ENCODE measurements at regions of chr1 and their contacts with region 1.

Region 1: DNA sequence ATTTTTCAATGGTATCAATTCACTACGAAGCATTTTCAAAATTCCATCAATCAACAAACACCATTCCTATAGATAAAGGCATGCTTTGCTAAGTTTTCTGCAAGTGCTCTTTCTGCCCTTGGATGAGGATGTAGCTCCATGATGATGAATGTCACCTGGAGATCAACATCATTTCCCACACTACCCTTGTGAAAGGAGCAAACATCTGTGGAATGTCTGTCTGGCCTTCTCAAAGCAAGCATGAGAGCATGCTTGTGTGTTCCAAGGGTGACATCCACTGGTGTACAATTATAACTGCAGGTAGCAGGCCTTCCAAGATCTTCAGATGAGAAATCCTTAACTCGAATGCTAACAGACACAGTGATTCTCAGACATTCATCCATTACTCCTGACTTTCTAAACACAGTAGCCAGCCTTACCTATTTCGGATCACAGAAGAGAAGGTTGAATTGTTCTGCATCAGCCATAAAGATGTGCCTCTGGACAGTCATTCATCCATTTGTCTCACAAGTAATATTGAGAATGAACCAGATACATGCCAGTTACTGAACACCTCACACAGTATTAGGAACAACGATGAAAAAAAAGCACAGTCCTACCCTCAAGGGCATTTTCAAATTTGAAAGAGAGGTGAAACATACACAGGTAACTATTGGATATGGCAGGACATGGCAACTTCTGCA is 162.4 kb downstream of the TPR start:
- DNase-seq: peak; percentile 63
- H3K4me3 Mint-ChIP-seq: no peak overlapping the region
- H3K27ac Mint-ChIP-seq: no peak overlapping the region
- H3K4me1 Mint-ChIP-seq: no peaks in the 10 kb centered on the region
- H3K27me3 Mint-ChIP-seq: no peaks in the 10 kb centered on the region
- CTCF ChIP-seq: peak; percentile 78

Region 2: DNA sequence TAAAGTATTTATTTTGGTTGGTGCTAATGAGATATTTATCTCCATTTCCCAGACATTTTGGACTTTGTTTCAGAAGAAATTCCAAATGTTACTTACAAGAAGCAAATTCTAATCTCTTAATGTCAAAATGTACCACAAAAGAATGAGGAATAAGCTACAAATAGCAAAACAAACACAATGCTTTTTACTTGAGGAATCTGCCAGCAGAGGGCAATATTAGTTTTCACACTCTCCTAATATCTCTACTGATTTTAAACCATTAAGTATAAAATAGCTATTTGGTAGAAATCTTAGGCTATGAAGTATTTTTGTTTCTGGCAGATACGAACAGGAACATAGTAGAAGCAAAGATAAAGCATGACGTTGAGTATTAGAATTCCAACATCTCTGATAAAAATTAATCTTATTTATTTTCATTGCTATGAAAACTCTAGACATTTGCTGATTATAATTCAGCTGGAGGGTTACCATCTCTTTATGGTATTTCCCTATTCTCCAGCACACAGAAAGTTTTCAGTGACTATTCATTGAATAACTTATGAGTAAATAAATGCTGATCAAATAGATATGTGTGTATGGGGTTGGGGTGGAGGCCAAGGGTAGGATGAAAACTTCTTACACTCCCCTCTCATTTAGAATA is 491.9 kb before region 1 on chr1:
- CTCF ChIA-PET with region 1: interaction called, 9 read pairs
- intact Hi-C with region 1: loop called (anchors 1 kb)
- DNase-seq: peak; percentile 18
- H3K4me3 Mint-ChIP-seq: no peak overlapping the region
- H3K27ac Mint-ChIP-seq: no peak overlapping the region
- H3K4me1 Mint-ChIP-seq: peaks cover 8% of the 10 kb centered on the region
- H3K27me3 Mint-ChIP-seq: no peaks in the 10 kb centered on the region
- CTCF ChIP-seq: peak; percentile 63

Region 3: DNA sequence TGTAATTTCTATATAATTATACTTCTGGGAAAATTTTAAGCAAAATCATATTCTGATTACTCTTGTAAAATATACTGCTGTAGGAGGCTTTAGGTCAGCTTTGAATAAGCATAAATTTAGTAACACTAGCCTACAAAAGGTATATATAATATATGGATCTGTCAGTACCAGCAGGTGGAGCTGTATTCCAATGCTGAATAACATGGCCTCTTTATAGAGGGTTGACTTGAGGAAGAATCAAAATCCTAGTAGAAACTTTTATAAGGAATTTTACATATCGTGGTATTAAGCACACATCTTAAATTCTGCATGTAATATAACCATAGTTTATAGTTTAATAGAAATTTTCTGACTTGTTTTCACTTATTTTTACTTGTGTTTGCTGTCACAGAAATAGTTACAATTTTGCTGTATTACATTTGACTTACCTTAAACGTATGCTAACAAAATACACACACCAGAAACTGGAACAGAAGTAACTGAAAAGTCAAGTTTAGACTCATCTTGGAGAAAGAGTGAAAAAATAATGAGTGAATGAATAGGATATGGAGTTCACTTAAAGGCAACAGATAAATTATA is 399.2 kb before region 1 on chr1:
- CTCF ChIA-PET with region 1: interaction called, 4 read pairs
- intact Hi-C with region 1: loop called (anchors 1 kb)
- DNase-seq: peak; percentile 48
- H3K4me3 Mint-ChIP-seq: no peak overlapping the region
- H3K27ac Mint-ChIP-seq: no peak overlapping the region
- H3K4me1 Mint-ChIP-seq: no peaks in the 10 kb centered on the region
- H3K27me3 Mint-ChIP-seq: no peaks in the 10 kb centered on the region
- CTCF ChIP-seq: peak; percentile 52

Region 4: GRCh38 chr1:185998390-185998789 is 214.3 kb before region 1 on chr1:
- CTCF ChIA-PET with region 1: interaction called, 3 read pairs
- intact Hi-C with region 1: loop called (anchors 1 kb)
- DNase-seq: peak; percentile 11
- H3K4me3 Mint-ChIP-seq: no peak overlapping the region
- H3K27ac Mint-ChIP-seq: no peak overlapping the region
- H3K4me1 Mint-ChIP-seq: peaks cover 10% of the 10 kb centered on the region
- H3K27me3 Mint-ChIP-seq: no peaks in the 10 kb centered on the region
- CTCF ChIP-seq: no peak

Region 5: DNA sequence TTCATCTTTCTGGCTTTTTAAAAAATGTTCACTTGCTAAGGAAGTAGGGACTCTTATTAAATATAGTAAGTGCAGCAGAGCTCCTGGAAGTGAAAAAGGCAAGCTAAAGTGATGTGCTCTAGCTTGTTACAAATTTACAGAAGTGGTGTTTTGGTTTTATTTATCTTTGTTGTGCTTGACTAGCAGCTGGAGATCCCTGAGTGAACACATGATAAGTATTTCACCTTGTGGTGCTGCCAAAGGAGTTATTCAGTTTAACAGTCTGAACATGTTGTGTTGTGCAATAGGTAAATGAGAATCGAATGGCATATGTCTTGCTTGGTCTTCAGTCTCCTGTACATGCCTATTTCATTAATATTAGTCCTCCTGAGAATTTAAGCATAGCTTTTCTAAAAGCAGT is 153.4 kb before region 1 on chr1:
- CTCF ChIA-PET with region 1: no interaction called
- intact Hi-C with region 1: no loop called
- DNase-seq: no peak
- H3K4me3 Mint-ChIP-seq: no peak overlapping the region
- H3K27ac Mint-ChIP-seq: no peak overlapping the region
- H3K4me1 Mint-ChIP-seq: no peaks in the 10 kb centered on the region
- H3K27me3 Mint-ChIP-seq: no peaks in the 10 kb centered on the region
- CTCF ChIP-seq: no peak

Region 6: GRCh38 chr1:186155594-186155993 is 57.1 kb before region 1 on chr1:
- CTCF ChIA-PET with region 1: interaction called, 12 read pairs
- intact Hi-C with region 1: loop called (anchors 1 kb)
- DNase-seq: peak; percentile 43
- H3K4me3 Mint-ChIP-seq: no peak overlapping the region
- H3K27ac Mint-ChIP-seq: no peak overlapping the region
- H3K4me1 Mint-ChIP-seq: peaks cover 12% of the 10 kb centered on the region
- H3K27me3 Mint-ChIP-seq: no peaks in the 10 kb centered on the region
- CTCF ChIP-seq: peak; percentile 39

Region 7: GRCh38 chr1:186178426-186179043 is 34.1 kb before region 1 on chr1:
- CTCF ChIA-PET with region 1: no interaction called
- intact Hi-C with region 1: no loop called
- DNase-seq: no peak
- H3K4me3 Mint-ChIP-seq: no peak overlapping the region
- H3K27ac Mint-ChIP-seq: no peak overlapping the region
- H3K4me1 Mint-ChIP-seq: no peaks in the 10 kb centered on the region
- H3K27me3 Mint-ChIP-seq: no peaks in the 10 kb centered on the region
- CTCF ChIP-seq: no peak

Measured in Calu3 (cell line).